K562 (cell line): ENCODE measurements at regions of chr2 and their contacts with region 1.

Region 1: GRCh38 chr2:46776687-46777327 is 138.8 kb downstream of the MCFD2 start:
- DNase-seq: peak; percentile 31 to 74 (median 49)
- ATAC-seq: peak; percentile 77
- H3K4me3 ChIP-seq: no peak overlapping the region
- H3K27ac ChIP-seq: no peak overlapping the region
- H3K4me1 ChIP-seq: no peaks in the 10 kb centered on the region
- H3K27me3 ChIP-seq: peaks cover 10 to 29% of the 10 kb centered on the region in 2 experiments; a peak in 4 of 5 replicates
- CTCF ChIP-seq: peak; percentile 73 to 88 (median 75)
- EP300 ChIP-seq: no peak
- POLR2A ChIP-seq: no peak
- RAD21 ChIP-seq: peak; percentile 70 to 85

Region 2: GRCh38 chr2:45993476-45993991 is 783.3 kb before region 1 on chr2:
- CTCF ChIA-PET with region 1: no interaction called
- POLR2A ChIA-PET with region 1: no interaction called
- in situ Hi-C with region 1: no loop called
- intact Hi-C with region 1: loop called (anchors 10 kb)
- DNase-seq: peak; percentile 60 to 77 (median 66)
- ATAC-seq: peak; percentile 81
- H3K4me3 ChIP-seq: no peak overlapping the region
- H3K27ac ChIP-seq: no peak overlapping the region
- H3K4me1 ChIP-seq: no peaks in the 10 kb centered on the region
- H3K27me3 ChIP-seq: peaks cover 0 to 20% of the 10 kb centered on the region in 2 experiments; a peak in 2 of 5 replicates
- CTCF ChIP-seq: peak; percentile 62 to 81 (median 76)
- EP300 ChIP-seq: no peak
- POLR2A ChIP-seq: no peak
- RAD21 ChIP-seq: peak; percentile 85 to 87

Region 3: GRCh38 chr2:46615986-46616485 is 160.8 kb before region 1 on chr2:
- CTCF ChIA-PET with region 1: no interaction called
- POLR2A ChIA-PET with region 1: no interaction called
- in situ Hi-C with region 1: no loop called
- intact Hi-C with region 1: no loop called
- DNase-seq: peak in 2 of 4 experiments; percentile 19 to 53
- ATAC-seq: peak; percentile 1; the same call in 2 of the 3 replicates
- H3K4me3 ChIP-seq: peak overlapping the region; percentile 86
- H3K27ac ChIP-seq: peak overlapping the region; percentile 89
- H3K4me1 ChIP-seq: peaks cover 10 to 12% of the 10 kb centered on the region in 2 experiments; a peak in 3 of 5 replicates
- H3K27me3 ChIP-seq: no peaks in the 10 kb centered on the region
- CTCF ChIP-seq: peak; percentile 22 to 47 (median 45); a peak in 4 of 6 replicates
- EP300 ChIP-seq: no peak
- POLR2A ChIP-seq: no peak
- RAD21 ChIP-seq: 0 out of 4 replicates have a peak, but pooled peaks of 1 of the 2 experiments have one; percentile 13

Region 4: GRCh38 chr2:46657042-46657504 is 119.7 kb before region 1 on chr2:
- CTCF ChIA-PET with region 1: interaction called, 3 read pairs
- POLR2A ChIA-PET with region 1: no interaction called
- in situ Hi-C with region 1: loop called (anchors 5 kb)
- intact Hi-C with region 1: loop called (anchors 2 kb)
- DNase-seq: peak; percentile 17 to 38 (median 32)
- ATAC-seq: peak; percentile 79
- H3K4me3 ChIP-seq: no peak overlapping the region
- H3K27ac ChIP-seq: no peak overlapping the region
- H3K4me1 ChIP-seq: no peaks in the 10 kb centered on the region
- H3K27me3 ChIP-seq: peaks cover 11 to 22% of the 10 kb centered on the region in 2 experiments; a peak in 3 of 5 replicates
- CTCF ChIP-seq: peak; percentile 40 to 66 (median 48); a peak in 5 of 6 replicates
- EP300 ChIP-seq: no peak
- POLR2A ChIP-seq: no peak
- RAD21 ChIP-seq: peak; percentile 37 to 61; a peak in 3 of 4 replicates

Region 5: DNA sequence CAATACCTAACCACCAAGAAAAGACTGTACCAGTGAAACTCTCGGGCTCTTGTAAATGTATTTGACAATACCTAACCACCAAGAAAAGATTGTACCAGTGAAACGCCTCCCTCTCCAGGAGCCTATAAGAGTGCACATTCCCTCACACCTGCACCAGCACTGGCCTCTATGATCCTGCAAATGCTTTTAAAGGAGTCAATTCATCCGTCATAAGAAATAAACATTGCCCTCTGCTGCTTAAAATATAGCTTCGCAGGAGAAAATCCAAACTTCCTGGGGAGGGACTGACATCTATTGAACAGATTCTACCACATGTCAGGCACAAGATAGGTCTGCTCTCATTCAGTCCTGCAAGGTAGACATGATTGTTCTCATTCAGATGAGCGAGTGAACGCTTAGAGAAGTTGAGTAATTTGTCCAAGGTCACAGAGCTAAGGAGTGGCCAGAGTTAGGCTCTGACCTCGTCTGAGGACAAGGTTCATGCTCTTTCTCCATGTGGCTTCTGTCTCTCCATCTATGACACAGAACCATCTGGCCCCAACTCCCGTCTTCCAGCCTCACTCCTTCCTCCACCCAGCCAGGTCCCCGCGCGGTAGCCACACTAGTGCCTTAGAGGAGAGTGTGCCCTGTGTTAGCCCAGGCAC is 100.1 kb after region 1 on chr2:
- CTCF ChIA-PET with region 1: no interaction called
- POLR2A ChIA-PET with region 1: interaction called, 4 read pairs
- in situ Hi-C with region 1: no loop called
- intact Hi-C with region 1: loop called (anchors 1 kb)
- DNase-seq: peak; percentile 54 to 79 (median 60)
- ATAC-seq: peak; percentile 80
- H3K4me3 ChIP-seq: no peak overlapping the region
- H3K27ac ChIP-seq: no peak overlapping the region
- H3K4me1 ChIP-seq: peaks cover 11 to 33% of the 10 kb centered on the region in 2 experiments
- H3K27me3 ChIP-seq: peaks cover 0 to 27% of the 10 kb centered on the region in 2 experiments; a peak in 4 of 5 replicates
- CTCF ChIP-seq: peak; percentile 64 to 95 (median 81)
- EP300 ChIP-seq: 0 out of 2 replicates have a peak, but pooled peaks have one; percentile 21
- POLR2A ChIP-seq: no peak
- RAD21 ChIP-seq: peak; percentile 83 to 89

Region 6: GRCh38 chr2:46887028-46887885 is 110.5 kb after region 1 on chr2:
- CTCF ChIA-PET with region 1: no interaction called
- POLR2A ChIA-PET with region 1: no interaction called
- in situ Hi-C with region 1: no loop called
- intact Hi-C with region 1: loop called (anchors 2 kb)
- DNase-seq: no peak
- ATAC-seq: no peak
- H3K4me3 ChIP-seq: no peak overlapping the region
- H3K27ac ChIP-seq: no peak overlapping the region
- H3K4me1 ChIP-seq: no peaks in the 10 kb centered on the region
- H3K27me3 ChIP-seq: peaks cover 14 to 36% of the 10 kb centered on the region in 2 experiments
- CTCF ChIP-seq: no peak
- EP300 ChIP-seq: no peak
- POLR2A ChIP-seq: no peak
- RAD21 ChIP-seq: no peak